AG04449 (cell line): ENCODE measurements at regions of chr3 and their contacts with region 1.

Region 1: GRCh38 chr3:186617038-186617946 is 4.4 kb downstream of the AHSG start:
- DNase-seq: peak; percentile 93
- H3K4me3 ChIP-seq: peak overlapping the region; percentile 44
- CTCF ChIP-seq: peak; percentile 99

Region 2: GRCh38 chr3:185942907-185943759 is 674.2 kb before region 1 on chr3:
- CTCF ChIA-PET with region 1: interaction called, 14 read pairs
- POLR2A ChIA-PET with region 1: interaction called, 3 read pairs
- DNase-seq: peak; percentile 23
- H3K4me3 ChIP-seq: no peak overlapping the region
- CTCF ChIP-seq: peak; percentile 96

Region 3: DNA sequence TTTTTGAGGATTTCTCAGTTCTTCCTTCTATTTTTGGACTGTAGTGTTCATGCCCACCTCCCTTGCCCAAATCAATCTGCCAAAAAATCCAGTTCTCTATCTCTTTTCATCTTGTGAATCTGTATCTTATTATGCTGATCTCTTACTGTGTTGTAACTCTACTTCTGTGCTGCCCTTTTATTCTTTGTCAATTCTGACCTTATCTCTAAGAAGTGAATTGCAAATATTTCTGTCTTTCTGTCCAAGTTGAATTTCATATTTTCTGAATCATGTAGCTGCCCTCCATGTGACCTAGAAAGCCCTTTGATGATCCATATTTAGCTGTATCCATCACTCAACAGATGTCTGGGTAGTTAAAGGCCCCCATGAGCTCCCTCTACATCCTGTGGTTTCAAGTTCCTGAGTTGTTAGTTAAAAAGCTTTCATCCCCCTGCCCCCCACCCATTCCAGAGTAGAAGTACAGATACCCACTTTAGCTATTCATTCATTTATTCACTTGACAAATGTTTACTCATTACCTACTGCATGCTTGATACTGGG is 474.8 kb before region 1 on chr3:
- CTCF ChIA-PET with region 1: no interaction called
- POLR2A ChIA-PET with region 1: no interaction called
- DNase-seq: no peak
- H3K4me3 ChIP-seq: no peak overlapping the region
- CTCF ChIP-seq: no peak

Region 4: GRCh38 chr3:186476044-186476468 is 141.2 kb before region 1 on chr3:
- CTCF ChIA-PET with region 1: no interaction called
- POLR2A ChIA-PET with region 1: no interaction called
- DNase-seq: no peak
- H3K4me3 ChIP-seq: no peak overlapping the region
- CTCF ChIP-seq: no peak

Region 5: DNA sequence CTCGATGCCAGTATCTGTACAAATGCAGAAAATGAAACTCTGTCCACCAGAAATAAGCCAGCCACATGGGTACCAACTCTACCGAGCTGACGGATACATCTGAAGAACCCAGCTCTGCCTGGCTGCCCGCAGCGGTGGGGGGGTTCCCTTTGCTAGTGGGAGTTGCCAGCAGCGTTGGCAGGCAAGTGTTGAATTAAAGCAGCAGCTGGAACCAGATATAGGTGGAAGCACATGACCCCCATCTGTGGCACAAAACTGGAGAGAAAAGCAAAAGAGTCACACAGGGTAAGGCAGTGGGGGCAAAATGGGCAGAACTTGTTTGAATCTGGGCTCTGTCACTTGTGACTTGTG is 91.1 kb before region 1 on chr3:
- CTCF ChIA-PET with region 1: no interaction called
- POLR2A ChIA-PET with region 1: no interaction called
- DNase-seq: no peak
- H3K4me3 ChIP-seq: no peak overlapping the region
- CTCF ChIP-seq: no peak

Region 6: GRCh38 chr3:186540221-186540834 is 77.0 kb before region 1 on chr3:
- CTCF ChIA-PET with region 1: interaction called, 22 read pairs
- POLR2A ChIA-PET with region 1: no interaction called
- DNase-seq: peak; percentile 21
- H3K4me3 ChIP-seq: no peak overlapping the region
- CTCF ChIP-seq: peak; percentile 32

Region 7: DNA sequence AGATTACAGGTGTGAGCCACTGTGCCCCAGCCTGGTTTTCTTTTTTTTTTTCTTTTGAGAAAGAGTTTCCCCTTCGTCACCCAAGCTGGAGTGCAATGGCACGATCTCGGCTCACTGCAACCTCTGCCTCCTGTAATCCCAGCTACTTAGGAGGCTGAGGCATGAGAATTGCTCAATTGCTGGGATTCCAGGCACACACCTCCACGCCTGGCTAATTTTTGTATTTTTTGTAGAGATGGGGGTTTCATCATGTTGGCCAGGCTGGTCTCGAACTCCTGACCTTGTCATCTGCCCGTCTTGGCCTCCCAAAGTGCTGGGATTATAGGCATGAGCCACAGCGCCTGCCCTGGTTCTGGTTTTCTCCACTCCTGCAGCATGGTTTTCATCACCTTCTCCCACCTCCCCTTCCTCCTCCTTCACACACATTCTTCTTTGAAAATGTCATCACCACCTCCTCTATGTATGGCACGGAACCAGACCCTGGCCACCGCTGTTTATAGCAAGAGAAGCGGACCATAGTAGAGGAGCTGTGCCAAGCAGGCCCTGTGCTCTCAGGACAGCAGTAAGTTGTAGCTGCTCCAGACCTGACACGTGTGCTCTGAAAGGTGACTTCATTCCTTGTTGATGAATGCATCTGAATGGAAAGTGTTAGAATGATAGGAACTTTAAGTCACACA is 19.0 kb before region 1 on chr3:
- CTCF ChIA-PET with region 1: interaction called, 193 read pairs
- POLR2A ChIA-PET with region 1: no interaction called
- DNase-seq: no peak
- H3K4me3 ChIP-seq: no peak overlapping the region
- CTCF ChIP-seq: no peak

Region 8: GRCh38 chr3:186783073-186783730 is 165.9 kb after region 1 on chr3 and contains the start of gene EIF4A2:
- CTCF ChIA-PET with region 1: interaction called, 49 read pairs
- POLR2A ChIA-PET with region 1: interaction called, 49 read pairs
- DNase-seq: peak; percentile 52
- H3K4me3 ChIP-seq: peak within 1 kb of the TSS; percentile 98
- CTCF ChIP-seq: no peak

Region 9: DNA sequence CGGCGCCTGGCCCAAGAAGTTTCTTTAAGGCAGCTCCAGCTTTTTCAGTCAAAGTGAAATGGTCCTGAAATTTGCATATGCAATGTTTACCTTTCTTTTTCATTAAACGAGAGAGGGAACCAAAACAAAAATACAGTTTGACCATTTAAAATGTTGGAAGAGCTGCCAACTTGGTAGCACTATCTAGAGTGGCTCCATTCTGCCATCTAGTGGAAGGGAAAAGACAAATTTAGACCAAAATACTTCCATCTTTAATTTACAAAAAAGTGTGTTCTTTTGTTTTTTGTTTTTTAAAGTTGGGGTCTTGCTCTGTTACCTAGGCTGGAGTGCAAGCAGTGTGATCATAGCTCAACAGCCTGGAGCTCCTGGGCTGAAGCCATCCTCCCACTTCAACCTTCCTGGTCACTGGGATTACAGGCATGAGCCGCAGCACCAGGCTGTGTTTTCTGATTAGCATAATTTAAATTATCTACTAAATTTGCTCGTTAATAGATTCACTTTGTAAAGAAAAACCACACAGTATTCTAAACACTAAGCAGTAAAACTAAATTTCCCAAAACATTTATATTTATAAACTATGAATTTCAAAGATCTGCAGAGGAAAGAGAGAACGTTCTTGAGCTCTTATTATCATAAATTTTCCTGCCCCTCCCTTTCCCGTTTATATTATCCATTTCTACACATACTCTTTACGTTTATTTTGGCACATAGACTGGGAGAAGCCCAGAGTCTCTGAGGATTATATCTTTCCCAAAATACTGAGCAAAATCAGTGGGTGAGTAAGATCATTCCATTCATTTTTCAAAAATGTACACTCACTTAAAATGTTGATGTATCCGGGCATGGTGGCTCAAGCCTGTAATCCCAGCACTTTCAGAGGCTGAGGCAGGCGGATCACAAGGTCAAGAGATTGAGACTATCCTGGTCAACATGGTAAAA is 204.4 kb after region 1 on chr3:
- CTCF ChIA-PET with region 1: interaction called, 140 read pairs
- POLR2A ChIA-PET with region 1: interaction called, 11 read pairs
- DNase-seq: peak; percentile 72
- H3K4me3 ChIP-seq: peak overlapping the region; percentile 48
- CTCF ChIP-seq: peak; percentile 35

Region 10: DNA sequence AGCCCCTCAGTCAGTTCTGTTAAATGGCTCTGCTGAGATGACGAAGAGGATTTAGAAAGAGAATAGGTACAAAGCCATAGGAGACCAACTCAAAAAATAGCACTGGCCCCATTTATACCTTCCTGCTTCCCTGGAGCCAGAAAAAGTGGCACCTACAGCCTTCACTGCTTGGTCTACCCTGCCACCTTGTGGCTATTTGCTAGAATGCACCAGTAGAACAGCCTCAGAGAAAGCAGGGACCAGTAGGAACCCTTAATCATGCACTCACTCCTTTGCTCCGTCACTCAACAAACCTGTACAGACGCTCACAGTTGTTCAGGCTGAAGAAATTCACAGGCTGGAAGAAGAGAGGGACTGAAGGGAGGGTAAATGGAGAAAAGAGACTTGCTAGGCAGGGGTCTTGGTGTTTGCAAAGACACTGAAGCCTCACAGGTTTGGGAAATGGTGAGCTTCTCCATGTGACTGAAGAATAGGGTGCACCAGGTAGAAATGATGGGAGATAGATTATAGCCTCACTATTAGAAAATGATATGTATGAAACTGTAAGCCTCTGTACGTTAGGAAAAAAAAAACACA is 1097.2 kb after region 1 on chr3:
- CTCF ChIA-PET with region 1: interaction called, 10 read pairs
- POLR2A ChIA-PET with region 1: no interaction called
- DNase-seq: no peak
- H3K4me3 ChIP-seq: no peak overlapping the region
- CTCF ChIP-seq: peak; percentile 90